MCF 10A (cell line): ENCODE measurements at regions of chr6 and their contacts with region 1.

Region 1: GRCh38 chr6:17803409-17803808 is 96.7 kb upstream of the NUP153 start:
- DNase-seq: no peak
- H3K4me3 Mint-ChIP-seq: no peak overlapping the region
- H3K27ac Mint-ChIP-seq: no peak overlapping the region
- H3K4me1 Mint-ChIP-seq: peaks cover 6% of the 10 kb centered on the region
- H3K27me3 Mint-ChIP-seq: no peaks in the 10 kb centered on the region
- CTCF ChIP-seq: no peak

Region 2: DNA sequence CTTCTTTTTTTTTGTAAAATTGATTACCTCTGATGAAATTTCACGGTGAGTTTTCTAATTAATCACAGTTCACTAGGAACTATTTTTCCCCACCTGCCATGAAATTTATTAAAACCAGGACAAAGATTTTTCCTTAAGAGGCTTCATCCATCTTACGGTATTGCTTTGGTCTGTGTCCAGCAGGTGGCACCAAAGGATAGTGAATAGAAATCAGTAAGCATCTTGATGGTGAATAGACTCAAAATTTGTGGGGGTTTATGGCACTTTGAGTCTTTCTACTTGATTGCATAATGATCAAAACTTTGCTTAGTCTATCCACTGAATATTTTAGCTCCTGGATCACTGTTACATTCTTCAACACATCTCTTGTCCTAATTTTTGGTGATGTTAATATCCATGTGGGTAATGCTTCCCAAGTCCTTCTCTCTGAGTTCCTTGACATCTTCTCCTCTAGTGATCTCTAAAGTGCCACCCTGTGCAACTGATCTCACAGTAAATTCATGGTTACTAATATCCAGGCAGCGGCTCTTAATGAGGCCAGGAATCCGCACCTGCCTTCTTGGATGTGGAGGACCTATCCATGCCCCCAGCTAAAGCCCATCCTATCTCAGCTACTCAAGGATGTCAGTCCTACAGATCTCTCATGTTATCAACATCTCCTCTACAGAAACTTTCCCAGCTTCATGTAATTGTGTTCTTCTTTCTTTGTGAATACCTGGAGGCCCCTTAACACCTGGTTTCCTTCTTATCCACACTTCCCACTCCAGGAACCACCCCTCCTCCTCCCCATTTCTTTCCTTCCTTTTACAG is 647.1 kb before region 1 on chr6:
- CTCF ChIA-PET with region 1: interaction called, 24 read pairs
- POLR2A ChIA-PET with region 1: no interaction called
- intact Hi-C with region 1: loop called (anchors 1 kb)
- DNase-seq: peak; percentile 81
- H3K4me3 Mint-ChIP-seq: no peak overlapping the region
- H3K27ac Mint-ChIP-seq: no peak overlapping the region
- H3K4me1 Mint-ChIP-seq: no peaks in the 10 kb centered on the region
- H3K27me3 Mint-ChIP-seq: no peaks in the 10 kb centered on the region
- CTCF ChIP-seq: peak; percentile 65

Region 3: GRCh38 chr6:17700421-17701416 is 102.7 kb before region 1 on chr6:
- CTCF ChIA-PET with region 1: interaction called, 4 read pairs
- POLR2A ChIA-PET with region 1: no interaction called
- intact Hi-C with region 1: loop called (anchors 5 kb)
- DNase-seq: no peak
- H3K4me3 Mint-ChIP-seq: no peak overlapping the region
- H3K27ac Mint-ChIP-seq: peak overlapping the region; percentile 74
- H3K4me1 Mint-ChIP-seq: no peaks in the 10 kb centered on the region
- H3K27me3 Mint-ChIP-seq: no peaks in the 10 kb centered on the region
- CTCF ChIP-seq: no peak

Region 4: DNA sequence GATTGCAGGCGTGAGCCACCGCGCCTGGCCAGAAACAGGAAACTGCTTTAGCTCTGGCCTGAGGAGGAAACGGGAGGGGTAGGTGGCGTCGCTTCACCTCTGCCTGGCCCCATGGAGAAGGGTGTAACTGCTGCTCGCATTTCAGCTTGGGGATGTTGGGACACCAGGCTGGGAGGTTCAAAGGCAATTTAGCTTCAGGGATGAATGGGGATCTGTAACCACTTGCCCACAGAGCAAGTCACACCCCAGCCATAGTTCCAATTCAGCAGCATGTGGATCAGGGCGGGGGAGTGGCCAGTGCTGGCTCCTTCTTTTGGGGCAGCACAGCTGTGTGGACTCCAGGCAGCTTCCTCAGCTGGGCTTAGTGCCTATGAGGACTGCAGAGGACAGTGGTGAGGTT is 61.9 kb before region 1 on chr6:
- CTCF ChIA-PET with region 1: interaction called, 11 read pairs
- POLR2A ChIA-PET with region 1: no interaction called
- intact Hi-C with region 1: no loop called
- DNase-seq: peak; percentile 47
- H3K4me3 Mint-ChIP-seq: no peak overlapping the region
- H3K27ac Mint-ChIP-seq: no peak overlapping the region
- H3K4me1 Mint-ChIP-seq: no peaks in the 10 kb centered on the region
- H3K27me3 Mint-ChIP-seq: no peaks in the 10 kb centered on the region
- CTCF ChIP-seq: no peak

Region 5: GRCh38 chr6:17790489-17790888 is 12.9 kb before region 1 on chr6:
- CTCF ChIA-PET with region 1: interaction called, 17 read pairs
- POLR2A ChIA-PET with region 1: no interaction called
- intact Hi-C with region 1: no loop called
- DNase-seq: no peak
- H3K4me3 Mint-ChIP-seq: no peak overlapping the region
- H3K27ac Mint-ChIP-seq: no peak overlapping the region
- H3K4me1 Mint-ChIP-seq: no peaks in the 10 kb centered on the region
- H3K27me3 Mint-ChIP-seq: no peaks in the 10 kb centered on the region
- CTCF ChIP-seq: no peak